CD8-positive, alpha-beta memory T cell (primary cell): ENCODE measurements at regions of chr17 and their contacts with region 1.

Region 1: DNA sequence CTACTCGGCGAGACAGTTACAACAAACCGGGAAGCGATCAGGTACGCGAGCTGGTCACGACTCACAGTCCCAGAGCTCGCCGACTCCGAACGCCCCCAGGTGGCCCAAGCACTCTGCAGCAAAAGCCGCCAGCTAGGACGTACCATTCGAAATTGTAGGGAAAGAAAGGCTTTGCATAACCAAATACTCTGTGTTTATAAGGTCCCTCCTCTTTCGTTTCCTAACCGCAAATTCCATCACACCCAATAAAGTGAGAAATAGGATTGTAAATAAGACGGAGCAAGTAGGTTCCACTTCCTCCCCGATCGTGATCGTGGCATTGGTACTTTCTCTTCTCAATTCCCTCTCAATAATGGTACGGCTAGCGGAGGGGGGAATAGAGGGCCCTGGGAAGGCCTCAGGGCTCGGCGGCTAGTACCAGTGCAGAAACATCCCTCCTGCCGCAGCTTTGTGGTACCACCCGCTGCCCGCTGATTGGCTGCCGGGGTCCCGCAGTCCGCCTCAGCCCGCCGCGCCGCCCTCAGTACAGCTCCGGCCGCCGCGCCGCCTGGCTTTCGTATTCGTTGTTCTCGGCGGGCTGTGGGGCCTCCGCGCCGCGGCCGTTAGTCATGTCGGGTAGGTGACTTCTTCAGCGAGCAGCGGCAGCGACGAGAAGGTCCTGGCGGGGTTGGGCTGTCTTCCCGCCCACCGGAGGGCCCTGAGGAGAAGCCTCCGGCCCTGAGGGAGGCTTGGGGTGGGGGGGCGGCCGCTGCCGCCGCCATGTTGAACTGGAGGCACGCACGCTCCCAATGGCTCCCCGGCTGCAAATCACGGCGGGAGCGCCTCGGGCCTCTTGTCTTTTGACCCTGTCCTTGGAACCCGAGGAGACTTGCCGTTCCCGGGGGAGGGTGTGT is at the start of gene TAF15:
- DNase-seq: peak; percentile 94 to 97 (median 97)
- H3K4me3 ChIP-seq: peak within 1 kb of the TSS; percentile 83
- H3K4me3 Mint-ChIP-seq: peak within 1 kb of the TSS; percentile 90 to 99 (median 97)
- H3K27ac ChIP-seq: peak within 1 kb of the TSS; percentile 83
- H3K27ac Mint-ChIP-seq: peak within 1 kb of the TSS; percentile 90 to 99 (median 97)
- H3K4me1 ChIP-seq: peaks cover 44% of the 10 kb centered on the region
- H3K4me1 Mint-ChIP-seq: peaks cover 49 to 59% (median 49%) of the 10 kb centered on the region in 3 donors
- H3K27me3 ChIP-seq: no peaks in the 10 kb centered on the region
- H3K27me3 Mint-ChIP-seq: no peaks in the 10 kb centered on the region
- total RNA-seq, gene TAF15: 274 to 291 TPM

Region 2: GRCh38 chr17:35747540-35748017 is 61.6 kb before region 1 on chr17:
- CTCF ChIA-PET with region 1: interaction called, 10 read pairs
- POLR2A ChIA-PET with region 1: interaction called, 4 read pairs
- DNase-seq: peak; percentile 64 to 83 (median 71)
- H3K4me3 ChIP-seq: no peak overlapping the region
- H3K4me3 Mint-ChIP-seq: no peak overlapping the region
- H3K27ac ChIP-seq: no peak overlapping the region
- H3K27ac Mint-ChIP-seq: peak overlapping the region in 1 of 8 donors; percentile 77
- H3K4me1 ChIP-seq: peaks cover 6% of the 10 kb centered on the region
- H3K4me1 Mint-ChIP-seq: peaks cover 4 to 18% (median 5%) of the 10 kb centered on the region in 3 donors
- H3K27me3 ChIP-seq: peaks cover 40% of the 10 kb centered on the region
- H3K27me3 Mint-ChIP-seq: peaks cover 49 to 58% of the 10 kb centered on the region in 2 donors

Region 3: DNA sequence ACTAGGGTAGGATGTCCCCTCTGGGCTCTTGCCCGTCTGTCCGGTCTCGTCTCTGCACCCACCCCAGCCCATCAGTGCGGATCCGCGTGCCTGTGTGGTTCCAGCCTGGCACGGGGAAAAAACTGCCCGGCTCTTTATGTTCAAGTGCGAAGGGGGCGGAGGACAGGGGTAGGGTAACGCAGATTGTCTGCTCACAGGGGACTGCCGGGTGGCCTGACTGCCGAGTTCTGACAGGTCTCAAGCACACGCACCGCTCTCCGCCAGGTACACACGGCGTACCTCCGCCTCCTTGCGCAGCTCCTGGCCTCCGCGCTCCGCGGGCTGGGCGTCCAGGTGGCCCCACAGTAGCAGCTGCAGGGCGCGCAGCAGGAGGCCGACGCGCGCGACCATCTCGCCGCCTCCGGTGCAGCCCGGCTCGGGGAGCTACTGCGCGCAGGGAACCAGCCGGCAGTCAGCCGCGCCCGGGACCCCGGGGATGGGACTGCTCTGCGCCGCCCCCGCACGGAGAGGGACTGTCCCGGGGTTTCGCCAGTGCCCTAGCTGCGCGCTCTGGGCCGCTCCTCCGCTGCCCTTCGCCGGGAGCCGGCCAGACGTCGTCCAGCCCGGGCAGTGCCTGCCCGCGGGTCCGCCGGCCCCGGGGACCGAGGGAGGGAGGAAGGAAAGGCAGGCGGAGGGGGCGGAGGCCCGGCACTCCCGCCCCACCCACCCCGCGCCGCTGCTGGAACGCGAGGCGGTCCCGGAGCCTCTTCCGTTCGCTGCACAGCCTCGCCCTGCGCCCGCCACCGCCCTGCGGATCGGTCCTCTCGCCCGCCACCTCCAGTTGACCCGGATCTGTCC is 14.0 kb before region 1 on chr17 and contains the start of gene MMP28:
- CTCF ChIA-PET with region 1: interaction called, 17 read pairs
- POLR2A ChIA-PET with region 1: interaction called, 6 read pairs
- DNase-seq: peak in 4 of 5 donors; percentile 1 to 57 (median 14)
- H3K4me3 ChIP-seq: peak within 1 kb of the TSS; percentile 58
- H3K4me3 Mint-ChIP-seq: peak within 1 kb of the TSS; percentile 55 to 87 (median 77)
- H3K27ac ChIP-seq: no peak within 1 kb of the TSS
- H3K27ac Mint-ChIP-seq: peak within 1 kb of the TSS in 1 of 8 donors; percentile 68
- H3K4me1 ChIP-seq: peaks cover 10% of the 10 kb centered on the region
- H3K4me1 Mint-ChIP-seq: peaks cover 5 to 17% (median 8%) of the 10 kb centered on the region in 3 donors
- H3K27me3 ChIP-seq: peaks cover 29% of the 10 kb centered on the region
- H3K27me3 Mint-ChIP-seq: peaks cover 39 to 65% of the 10 kb centered on the region in 2 donors
- total RNA-seq, gene MMP28: not detected

Region 4: DNA sequence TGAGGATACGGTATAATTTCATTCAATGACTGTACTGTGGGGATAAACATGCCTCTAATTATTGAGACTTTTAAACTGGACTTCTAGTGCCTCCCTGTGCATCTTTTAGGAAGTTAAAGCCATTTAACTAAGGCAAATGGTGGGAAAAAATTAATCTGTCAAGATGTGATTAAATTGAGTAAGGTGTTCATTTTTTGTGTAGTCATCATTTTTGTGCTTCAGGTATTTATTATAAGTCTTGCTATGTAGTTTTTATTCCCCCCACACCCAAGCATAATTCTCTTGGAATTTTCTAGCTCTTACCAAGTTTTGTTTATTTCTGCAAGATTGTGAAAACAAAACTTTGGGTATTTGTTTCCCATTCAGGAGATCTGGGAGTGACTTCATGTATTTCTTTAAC is 10.2 kb after region 1 on chr17:
- CTCF ChIA-PET with region 1: interaction called, 13 read pairs
- POLR2A ChIA-PET with region 1: interaction called, 3 read pairs
- DNase-seq: no peak
- H3K4me3 ChIP-seq: no peak overlapping the region
- H3K4me3 Mint-ChIP-seq: no peak overlapping the region
- H3K27ac ChIP-seq: no peak overlapping the region
- H3K27ac Mint-ChIP-seq: peak overlapping the region in 4 of 8 donors; percentile 5 to 55 (median 32)
- H3K4me1 ChIP-seq: peaks cover 13% of the 10 kb centered on the region
- H3K4me1 Mint-ChIP-seq: peaks cover 47 to 75% (median 71%) of the 10 kb centered on the region in 3 donors
- H3K27me3 ChIP-seq: no peaks in the 10 kb centered on the region
- H3K27me3 Mint-ChIP-seq: no peaks in the 10 kb centered on the region

Region 5: GRCh38 chr17:36105781-36106492 is 296.7 kb after region 1 on chr17:
- CTCF ChIA-PET with region 1: no interaction called
- POLR2A ChIA-PET with region 1: no interaction called
- DNase-seq: no peak
- H3K4me3 ChIP-seq: no peak overlapping the region
- H3K4me3 Mint-ChIP-seq: peak overlapping the region; percentile 91 to 98 (median 97)
- H3K27ac ChIP-seq: no peak overlapping the region
- H3K27ac Mint-ChIP-seq: peak overlapping the region; percentile 93 to 99 (median 98)
- H3K4me1 ChIP-seq: peaks cover 48% of the 10 kb centered on the region
- H3K4me1 Mint-ChIP-seq: peaks cover 61 to 70% (median 68%) of the 10 kb centered on the region in 3 donors
- H3K27me3 ChIP-seq: no peaks in the 10 kb centered on the region
- H3K27me3 Mint-ChIP-seq: no peaks in the 10 kb centered on the region